Naive thymus-derived CD4-positive, alpha-beta T cell (primary cell): ENCODE measurements at regions of chr12 and their contacts with region 1.

Region 1: DNA sequence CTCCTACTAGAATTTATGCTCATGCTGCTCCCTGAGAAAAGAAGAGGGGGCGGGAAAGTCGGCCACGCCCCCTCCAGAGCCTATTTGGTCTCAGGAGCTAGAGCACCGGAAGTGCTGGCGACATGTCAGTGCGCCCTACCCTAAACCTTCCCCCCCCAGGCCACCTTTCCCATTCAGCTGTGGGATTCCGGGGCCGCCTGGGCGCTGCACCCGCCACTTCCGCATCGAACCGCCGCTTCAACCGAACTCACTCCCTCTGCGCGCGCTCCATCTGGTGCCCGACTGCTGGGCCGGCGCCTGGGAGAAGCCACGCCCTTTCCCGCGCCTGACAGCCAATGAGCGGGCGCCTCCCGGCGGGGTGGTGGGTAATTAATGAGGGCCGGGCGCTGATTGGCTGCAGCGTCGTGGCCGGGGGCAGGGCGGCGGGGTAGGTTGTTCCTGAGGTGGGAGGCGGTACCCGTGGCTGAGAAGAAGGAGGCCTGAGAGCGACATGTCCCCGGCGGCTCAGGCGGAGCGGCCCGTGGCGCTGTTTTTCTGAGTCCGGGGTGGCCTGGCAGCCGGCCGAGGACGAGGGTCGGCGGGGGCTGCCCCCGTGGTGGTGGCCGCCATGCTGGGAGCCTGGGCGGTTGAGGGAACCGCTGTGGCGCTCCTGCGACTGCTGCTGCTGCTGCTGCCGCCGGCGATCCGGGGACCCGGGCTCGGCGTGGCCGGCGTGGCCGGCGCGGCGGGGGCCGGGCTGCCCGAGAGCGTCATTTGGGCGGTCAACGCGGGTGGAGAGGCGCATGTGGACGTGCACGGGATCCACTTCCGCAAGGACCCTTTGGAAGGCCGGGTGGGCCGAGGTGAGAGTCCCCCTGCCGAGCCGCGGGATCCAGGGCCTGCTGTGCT is at the start of gene MLEC:
- DNase-seq: peak; percentile 98 to 100 (median 99)
- ATAC-seq: peak; percentile 88
- H3K4me3 ChIP-seq: peak within 1 kb of the TSS; percentile 99
- H3K4me3 Mint-ChIP-seq: peak within 1 kb of the TSS; percentile 90 to 95 (median 94)
- H3K27ac ChIP-seq: peak within 1 kb of the TSS; percentile 77
- H3K27ac Mint-ChIP-seq: peak within 1 kb of the TSS; percentile 91 to 97 (median 95)
- H3K4me1 ChIP-seq: peaks cover 12 to 22% of the 10 kb centered on the region in 2 donors
- H3K4me1 Mint-ChIP-seq: peaks cover 22 to 53% (median 41%) of the 10 kb centered on the region in 7 donors
- H3K27me3 ChIP-seq: no peaks in the 10 kb centered on the region
- H3K27me3 Mint-ChIP-seq: peaks cover 0 to 3% (median 0%) of the 10 kb centered on the region in 5 donors
- total RNA-seq, gene MLEC: 27.6 to 132 (median 57.6) TPM

Region 2: DNA sequence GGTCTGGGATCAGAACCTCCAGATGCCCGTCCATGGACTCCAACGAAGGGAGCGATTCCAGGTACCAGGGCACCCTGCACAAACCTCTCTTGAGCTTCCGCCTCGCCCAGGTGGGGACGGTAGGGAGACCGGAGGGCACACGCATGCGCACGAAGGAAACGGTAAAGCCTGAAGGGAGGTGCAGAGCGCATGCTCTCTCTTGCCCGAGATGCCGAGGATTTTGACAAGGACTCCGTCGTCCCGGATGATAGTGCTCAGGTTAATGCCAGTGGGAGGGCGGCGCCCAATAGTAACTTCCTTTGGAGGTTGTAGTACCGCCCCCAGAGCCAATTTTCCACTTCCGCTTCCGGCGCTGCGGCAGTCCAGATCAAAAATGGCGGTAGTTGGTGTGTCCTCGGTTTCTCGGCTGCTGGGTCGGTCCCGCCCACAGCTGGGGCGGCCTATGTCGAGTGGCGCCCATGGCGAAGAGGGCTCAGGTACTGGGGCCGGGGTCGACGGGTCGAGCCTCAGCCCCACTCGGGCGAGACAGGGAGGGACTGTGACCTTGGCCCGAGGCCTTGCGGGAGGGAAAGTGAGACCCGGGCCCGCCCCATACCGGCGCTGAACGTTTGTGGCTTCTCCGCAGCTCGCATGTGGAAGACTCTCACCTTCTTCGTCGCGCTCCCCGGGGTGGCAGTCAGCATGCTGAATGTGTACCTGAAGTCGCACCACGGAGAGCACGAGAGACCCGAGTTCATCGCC is 249.0 kb before region 1 on chr12 and contains the start of gene COX6A1:
- CTCF ChIA-PET with region 1: no interaction called
- POLR2A ChIA-PET with region 1: no interaction called
- intact Hi-C with region 1: loop called (anchors 1 to 2 kb)
- DNase-seq: peak; percentile 77 to 99 (median 96)
- ATAC-seq: peak; percentile 96
- H3K4me3 ChIP-seq: peak within 1 kb of the TSS; percentile 63
- H3K4me3 Mint-ChIP-seq: peak within 1 kb of the TSS; percentile 87 to 100 (median 96)
- H3K27ac ChIP-seq: peak within 1 kb of the TSS; percentile 83
- H3K27ac Mint-ChIP-seq: peak within 1 kb of the TSS; percentile 88 to 97 (median 93)
- H3K4me1 ChIP-seq: peaks cover 15 to 20% of the 10 kb centered on the region in 2 donors
- H3K4me1 Mint-ChIP-seq: peaks cover 17 to 33% (median 30%) of the 10 kb centered on the region in 7 donors
- H3K27me3 ChIP-seq: no peaks in the 10 kb centered on the region
- H3K27me3 Mint-ChIP-seq: peaks cover 0 to 4% (median 2%) of the 10 kb centered on the region in 5 donors
- total RNA-seq, gene COX6A1: 118 to 270 (median 130) TPM

Region 3: DNA sequence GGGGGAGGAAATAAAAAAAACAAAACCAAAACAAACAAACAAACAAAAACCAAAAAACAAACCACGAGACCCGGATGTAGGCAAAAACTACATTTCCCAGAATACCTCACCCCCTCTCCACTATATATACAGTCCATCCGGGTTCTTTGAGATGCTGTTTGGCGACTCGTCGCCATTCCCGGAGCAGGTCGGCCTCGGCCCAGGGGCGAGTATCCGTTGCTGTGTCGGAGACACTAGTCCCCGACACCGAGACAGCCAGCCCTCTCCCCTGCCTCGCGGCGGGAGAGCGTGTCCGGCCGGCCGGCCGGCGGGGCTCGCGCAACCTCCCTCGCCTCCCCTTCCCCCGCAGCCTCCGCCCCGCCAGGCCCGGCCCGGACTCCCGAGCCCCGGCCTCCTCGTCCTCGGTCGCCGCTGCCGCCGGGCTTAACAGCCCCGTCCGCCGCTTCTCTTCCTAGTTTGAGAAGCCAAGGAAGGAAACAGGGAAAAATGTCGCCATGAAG is 152.7 kb before region 1 on chr12 and contains the start of gene RNF10:
- CTCF ChIA-PET with region 1: no interaction called
- POLR2A ChIA-PET with region 1: interaction called, 4 read pairs
- intact Hi-C with region 1: loop called (anchors 2 to 5 kb)
- DNase-seq: peak; percentile 61 to 88 (median 85)
- ATAC-seq: peak; percentile 84
- H3K4me3 ChIP-seq: peak within 1 kb of the TSS; percentile 92
- H3K4me3 Mint-ChIP-seq: peak within 1 kb of the TSS; percentile 87 to 98 (median 96)
- H3K27ac ChIP-seq: peak within 1 kb of the TSS; percentile 97
- H3K27ac Mint-ChIP-seq: peak within 1 kb of the TSS; percentile 90 to 95 (median 95)
- H3K4me1 ChIP-seq: peaks cover 34 to 40% of the 10 kb centered on the region in 2 donors
- H3K4me1 Mint-ChIP-seq: peaks cover 28 to 57% (median 54%) of the 10 kb centered on the region in 7 donors
- H3K27me3 ChIP-seq: no peaks in the 10 kb centered on the region
- H3K27me3 Mint-ChIP-seq: peaks cover 0 to 2% (median 0%) of the 10 kb centered on the region in 5 donors
- total RNA-seq, gene RNF10: 171 to 361 (median 205) TPM

Region 4: DNA sequence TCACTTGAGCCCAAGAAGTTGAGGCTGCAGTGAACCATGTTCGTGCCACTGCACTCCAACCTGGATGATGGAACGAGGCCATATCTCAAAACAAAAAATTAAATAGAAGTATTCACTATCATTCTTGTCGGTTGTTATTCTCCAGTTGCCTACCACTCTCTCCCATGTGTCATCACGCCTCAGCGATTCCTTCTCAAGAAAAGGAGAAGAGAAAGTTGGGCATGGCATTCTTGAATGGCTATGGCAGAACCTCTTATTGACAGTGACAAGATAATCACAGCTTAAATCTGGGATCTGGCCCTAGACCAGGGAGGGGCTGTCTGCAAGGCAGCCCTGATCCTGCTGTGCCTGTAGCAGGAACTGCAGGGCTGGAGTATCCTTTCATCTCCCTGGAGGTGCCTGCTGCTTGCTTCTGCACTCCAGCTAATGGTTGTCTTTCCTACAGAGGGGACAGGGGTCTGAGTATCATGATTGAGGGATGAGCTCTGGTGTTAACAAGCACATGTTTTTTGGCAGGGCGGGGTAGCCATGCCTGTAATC is 12.8 kb before region 1 on chr12:
- CTCF ChIA-PET with region 1: no interaction called
- POLR2A ChIA-PET with region 1: no interaction called
- intact Hi-C with region 1: no loop called
- DNase-seq: no peak
- ATAC-seq: peak; percentile 26
- H3K4me3 ChIP-seq: no peak overlapping the region
- H3K4me3 Mint-ChIP-seq: no peak overlapping the region
- H3K27ac ChIP-seq: no peak overlapping the region
- H3K27ac Mint-ChIP-seq: no peak overlapping the region
- H3K4me1 ChIP-seq: no peaks in the 10 kb centered on the region
- H3K4me1 Mint-ChIP-seq: peaks cover 0 to 17% (median 0%) of the 10 kb centered on the region in 7 donors
- H3K27me3 ChIP-seq: no peaks in the 10 kb centered on the region
- H3K27me3 Mint-ChIP-seq: peaks cover 0 to 6% (median 0%) of the 10 kb centered on the region in 5 donors

Region 5: DNA sequence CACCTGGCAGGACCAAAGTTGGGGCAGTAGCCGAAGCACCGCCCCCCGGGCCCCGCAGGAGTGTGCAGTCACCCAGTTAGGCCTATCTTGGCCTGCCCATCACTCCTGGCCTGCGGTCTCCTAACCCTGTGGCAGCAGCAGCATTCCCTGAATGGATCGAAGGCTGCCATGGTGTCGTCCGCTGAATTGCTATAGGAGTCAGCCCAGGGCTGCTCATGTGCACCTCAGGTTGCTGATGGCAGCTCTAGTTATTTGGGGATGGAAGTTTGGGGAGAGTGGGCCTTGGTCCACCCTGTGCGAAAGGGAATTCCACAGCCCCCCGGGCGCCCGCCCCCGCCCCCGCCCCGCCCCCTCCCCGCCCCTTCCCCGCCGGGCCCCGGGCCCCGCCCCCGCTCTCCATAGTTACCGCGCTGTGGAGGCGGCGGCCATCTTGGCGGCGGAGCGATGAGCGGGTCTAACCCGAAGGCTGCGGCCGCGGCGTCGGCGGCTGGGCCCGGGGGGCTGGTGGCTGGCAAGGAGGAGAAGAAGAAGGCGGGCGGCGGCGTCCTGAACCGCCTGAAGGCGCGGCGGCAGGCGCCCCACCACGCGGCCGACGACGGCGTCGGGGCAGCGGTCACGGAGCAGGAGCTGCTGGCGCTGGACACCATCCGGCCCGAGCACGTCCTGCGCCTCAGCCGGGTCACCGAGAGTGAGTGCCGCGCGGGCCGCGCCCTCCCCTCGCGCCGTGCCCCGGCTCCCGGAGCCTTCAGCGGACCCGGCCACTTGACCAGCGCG is 23.3 kb after region 1 on chr12 and contains the start of gene UNC119B:
- CTCF ChIA-PET with region 1: interaction called, 3 read pairs
- POLR2A ChIA-PET with region 1: interaction called, 3 read pairs
- intact Hi-C with region 1: loop called (anchors 1 kb)
- DNase-seq: peak; percentile 53 to 82 (median 69)
- ATAC-seq: peak; percentile 92
- H3K4me3 ChIP-seq: peak within 1 kb of the TSS; percentile 69
- H3K4me3 Mint-ChIP-seq: peak within 1 kb of the TSS; percentile 87 to 98 (median 95)
- H3K27ac ChIP-seq: peak within 1 kb of the TSS; percentile 83
- H3K27ac Mint-ChIP-seq: peak within 1 kb of the TSS; percentile 87 to 96 (median 92)
- H3K4me1 ChIP-seq: peaks cover 5 to 7% of the 10 kb centered on the region in 2 donors
- H3K4me1 Mint-ChIP-seq: peaks cover 20 to 40% (median 37%) of the 10 kb centered on the region in 7 donors
- H3K27me3 ChIP-seq: no peaks in the 10 kb centered on the region
- H3K27me3 Mint-ChIP-seq: no peaks in the 10 kb centered on the region
- total RNA-seq, gene UNC119B: 10.9 to 26.7 (median 18.8) TPM

Region 6: DNA sequence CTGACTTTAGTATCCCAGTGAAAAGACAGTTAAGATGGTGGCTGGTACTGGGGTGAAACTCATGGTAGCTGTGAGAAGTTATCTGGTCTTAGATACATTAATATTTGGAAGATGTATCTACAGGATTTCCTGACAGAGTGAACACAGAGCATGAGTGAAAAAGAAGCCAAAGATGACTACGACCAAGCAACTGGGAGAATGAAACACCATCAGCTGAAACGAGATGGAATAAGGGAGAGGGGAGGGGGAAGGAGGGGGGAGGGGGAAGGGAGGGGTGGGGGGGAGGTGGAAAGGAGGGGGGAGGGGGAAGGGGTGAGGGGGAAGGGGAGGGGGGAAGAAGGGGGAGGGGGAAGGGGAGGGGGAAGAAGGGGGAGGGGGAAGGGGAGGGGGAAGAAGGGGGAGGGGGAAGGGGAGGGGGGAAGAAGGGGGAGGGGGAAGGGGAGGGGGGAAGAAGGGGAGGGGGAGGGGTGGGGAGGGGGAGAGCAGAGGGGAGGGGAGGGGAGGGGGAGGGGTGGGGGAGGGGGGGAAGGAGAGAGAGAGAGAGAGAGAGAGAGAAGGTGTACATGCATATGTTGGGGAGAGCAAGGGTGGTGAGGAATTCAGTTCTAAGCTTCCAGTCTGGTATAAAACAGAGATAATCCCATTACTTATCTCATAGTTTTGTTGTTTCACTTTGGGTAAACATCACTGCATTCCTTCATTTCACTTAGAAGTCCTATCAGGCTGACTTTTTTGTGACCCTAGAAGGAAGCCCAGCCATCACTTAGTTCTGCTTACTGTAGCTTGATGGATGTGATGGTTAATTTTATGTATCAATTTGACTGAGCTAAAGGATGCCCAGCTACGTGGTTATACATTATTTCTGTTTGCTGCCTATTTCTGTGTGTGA is 143.4 kb after region 1 on chr12:
- CTCF ChIA-PET with region 1: no interaction called
- POLR2A ChIA-PET with region 1: no interaction called
- intact Hi-C with region 1: no loop called
- DNase-seq: no peak
- ATAC-seq: no peak
- H3K4me3 ChIP-seq: no peak overlapping the region
- H3K4me3 Mint-ChIP-seq: no peak overlapping the region
- H3K27ac ChIP-seq: no peak overlapping the region
- H3K27ac Mint-ChIP-seq: peak overlapping the region in 3 of 9 donors; percentile 15 to 69 (median 29)
- H3K4me1 ChIP-seq: peaks cover 0 to 21% of the 10 kb centered on the region in 2 donors
- H3K4me1 Mint-ChIP-seq: peaks cover 28 to 82% (median 58%) of the 10 kb centered on the region in 7 donors
- H3K27me3 ChIP-seq: no peaks in the 10 kb centered on the region
- H3K27me3 Mint-ChIP-seq: no peaks in the 10 kb centered on the region

Region 7: GRCh38 chr12:121015825-121016766 is 329.2 kb after region 1 on chr12 and contains the start of gene C12orf43:
- CTCF ChIA-PET with region 1: no interaction called
- POLR2A ChIA-PET with region 1: no interaction called
- intact Hi-C with region 1: loop called in 1 of 2 experiments (anchors 1 kb)
- DNase-seq: peak; percentile 74 to 93 (median 89)
- ATAC-seq: peak; percentile 99
- H3K4me3 ChIP-seq: peak within 1 kb of the TSS; percentile 88
- H3K4me3 Mint-ChIP-seq: peak within 1 kb of the TSS; percentile 93 to 99 (median 96)
- H3K27ac ChIP-seq: peak within 1 kb of the TSS; percentile 88
- H3K27ac Mint-ChIP-seq: peak within 1 kb of the TSS; percentile 89 to 97 (median 95)
- H3K4me1 ChIP-seq: peaks cover 6 to 11% of the 10 kb centered on the region in 2 donors
- H3K4me1 Mint-ChIP-seq: peaks cover 17 to 32% (median 24%) of the 10 kb centered on the region in 7 donors
- H3K27me3 ChIP-seq: no peaks in the 10 kb centered on the region
- H3K27me3 Mint-ChIP-seq: no peaks in the 10 kb centered on the region
- total RNA-seq, gene C12orf43: 11.8 to 24.2 (median 17.5) TPM

Region 8: DNA sequence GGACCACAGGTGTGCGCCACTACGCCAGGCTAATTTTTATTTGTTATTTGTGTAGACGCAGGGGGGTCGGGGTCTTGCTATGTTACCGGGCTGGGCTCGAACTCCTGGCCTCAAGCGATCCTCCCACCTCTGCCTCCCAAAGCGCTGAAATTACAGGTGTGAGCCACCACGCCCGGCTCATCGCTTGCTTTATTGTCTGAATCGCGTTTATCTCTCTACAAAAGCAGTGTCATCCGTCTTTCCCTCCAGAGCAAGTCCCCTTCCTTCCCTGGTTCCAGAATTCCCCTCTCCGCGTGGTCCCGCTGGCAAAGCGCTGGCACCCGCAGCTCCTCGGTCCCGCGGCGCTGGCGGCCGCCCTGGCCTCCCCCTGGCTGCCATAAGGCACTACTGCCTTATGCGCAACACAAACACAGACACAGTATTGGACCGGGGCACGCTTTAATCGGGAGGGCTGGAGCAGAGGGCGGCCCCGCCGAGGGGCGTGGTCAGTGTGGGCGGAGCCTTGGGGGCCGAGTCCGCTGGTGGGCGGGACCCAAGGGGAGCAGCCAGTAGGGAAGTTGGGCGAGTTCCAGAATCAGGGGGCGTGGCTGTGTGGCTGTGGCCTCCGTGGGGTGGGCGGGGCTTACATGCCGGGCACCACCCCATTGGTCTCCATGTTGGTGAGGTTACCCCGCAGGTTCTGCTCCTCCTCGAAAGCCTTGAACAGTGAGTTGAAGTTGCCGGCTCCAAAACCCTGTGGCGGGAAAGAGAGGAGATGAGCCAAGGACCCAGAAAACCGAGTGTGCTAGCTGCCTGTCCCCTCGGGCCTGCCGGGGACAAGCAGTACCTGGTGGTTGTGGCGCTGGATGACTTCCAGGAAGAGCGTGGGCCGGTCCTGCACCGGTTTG is 1152.4 kb after region 1 on chr12:
- CTCF ChIA-PET with region 1: no interaction called
- POLR2A ChIA-PET with region 1: no interaction called
- intact Hi-C with region 1: loop called in 1 of 2 experiments (anchors 5 kb)
- DNase-seq: peak; percentile 98 to 100 (median 99)
- ATAC-seq: peak; percentile 100
- H3K4me3 ChIP-seq: peak overlapping the region; percentile 91
- H3K4me3 Mint-ChIP-seq: peak overlapping the region; percentile 96 to 100 (median 98)
- H3K27ac ChIP-seq: peak overlapping the region; percentile 58
- H3K27ac Mint-ChIP-seq: peak overlapping the region; percentile 87 to 96 (median 92)
- H3K4me1 ChIP-seq: peaks cover 8 to 13% of the 10 kb centered on the region in 2 donors
- H3K4me1 Mint-ChIP-seq: peaks cover 12 to 27% (median 18%) of the 10 kb centered on the region in 7 donors
- H3K27me3 ChIP-seq: no peaks in the 10 kb centered on the region
- H3K27me3 Mint-ChIP-seq: no peaks in the 10 kb centered on the region